Gastrocnemius medialis (tissue), 4 donors: ENCODE measurements at regions of chr10 and their contacts with region 1.

Region 1: DNA sequence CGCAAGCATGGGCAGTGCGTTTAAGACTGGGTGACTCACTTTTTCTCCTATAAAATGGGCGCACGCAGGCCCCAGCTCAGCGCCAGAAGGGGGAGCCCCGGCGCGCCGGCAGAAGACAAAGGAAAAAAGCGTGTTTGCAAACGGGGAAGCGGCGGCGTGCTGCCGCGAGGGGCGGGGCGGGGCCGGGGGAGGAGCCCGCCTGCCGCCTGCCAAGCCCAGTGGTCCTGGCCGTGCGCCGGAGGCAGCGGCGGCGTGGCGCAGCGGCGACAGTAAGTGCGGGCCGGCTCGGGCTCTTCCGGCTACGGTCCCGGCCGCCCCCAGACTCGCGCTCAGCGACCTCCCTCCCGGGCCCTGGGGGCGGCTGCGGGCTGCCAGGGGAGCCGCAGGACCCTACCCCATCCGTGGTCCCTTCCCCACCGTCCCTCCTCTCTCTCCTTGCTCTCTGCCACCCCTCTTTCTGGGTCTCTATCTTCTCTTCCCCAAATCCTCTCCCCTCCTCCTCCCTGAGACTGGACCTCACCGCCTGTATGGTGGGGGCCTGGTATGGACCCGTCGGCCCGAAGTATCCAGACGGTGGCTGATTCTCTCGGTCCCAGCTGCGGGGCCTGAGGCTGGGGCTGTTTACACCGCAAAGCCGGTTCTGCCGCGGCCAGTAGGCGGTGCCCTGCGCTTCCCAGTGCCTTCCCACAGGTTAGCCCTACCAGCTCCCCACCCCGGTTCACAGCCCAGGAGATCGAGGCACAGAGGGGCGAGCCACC is at the start of gene SLC29A3:
- DNase-seq: peak; percentile 57 to 65
- ATAC-seq: peak; percentile 88 to 89
- H3K4me3 ChIP-seq: peak within 1 kb of the TSS; percentile 64 to 83 (median 68)
- H3K27ac ChIP-seq: peak within 1 kb of the TSS; percentile 70 to 76 (median 73)
- H3K4me1 ChIP-seq: peaks cover 0 to 9% of the 10 kb centered on the region in 2 donors
- H3K27me3 ChIP-seq: no peaks in the 10 kb centered on the region
- CTCF ChIP-seq: peak; percentile 50 to 75 (median 55)
- POLR2A ChIP-seq: peak; percentile 62 to 77
- total RNA-seq, gene SLC29A3: 0.36 to 2.8 (median 2.0) TPM

Region 2: DNA sequence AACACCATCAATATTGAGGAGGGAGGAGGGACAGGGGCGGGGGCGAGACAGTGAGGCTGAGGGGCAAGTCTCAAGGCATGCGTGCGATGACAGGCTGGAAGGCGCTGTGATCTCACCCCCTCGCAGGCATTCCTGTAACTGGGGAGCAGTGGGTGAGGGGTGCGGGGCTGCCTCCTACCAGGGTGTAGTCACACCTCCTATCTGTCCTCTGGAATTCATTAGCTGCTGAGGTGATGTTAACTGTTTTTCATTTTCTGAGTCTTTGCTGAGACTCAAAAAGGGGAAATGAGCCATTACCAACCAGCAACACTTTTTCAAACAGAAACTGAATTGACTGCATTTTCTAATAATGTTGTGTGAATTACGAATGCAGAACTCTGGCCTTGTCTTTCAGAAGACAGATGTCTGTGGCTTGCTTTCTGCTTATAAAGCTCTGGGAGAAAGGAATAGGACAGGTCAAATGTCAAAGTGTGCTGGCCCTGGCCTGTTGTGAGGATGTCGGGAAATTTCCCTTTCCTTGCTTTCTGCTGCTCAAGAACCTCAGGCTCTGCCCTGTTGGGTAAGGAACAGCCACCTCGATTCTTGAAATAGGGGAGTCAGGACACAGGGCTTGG is 53.8 kb after region 1 on chr10:
- in situ Hi-C with region 1: no loop called
- intact Hi-C with region 1: loop called (anchors 1 kb)
- DNase-seq: no peak
- ATAC-seq: no peak
- H3K4me3 ChIP-seq: no peak overlapping the region
- H3K27ac ChIP-seq: no peak overlapping the region
- H3K4me1 ChIP-seq: peaks cover 7 to 9% of the 10 kb centered on the region in 2 donors
- H3K27me3 ChIP-seq: no peaks in the 10 kb centered on the region
- CTCF ChIP-seq: no peak
- POLR2A ChIP-seq: no peak

Region 3: GRCh38 chr10:71569775-71570588 is 250.8 kb after region 1 on chr10:
- in situ Hi-C with region 1: loop called (anchors 5 to 25 kb)
- intact Hi-C with region 1: loop called (anchors 1 kb)
- DNase-seq: peak; percentile 45 to 56
- ATAC-seq: peak; percentile 61 to 73
- H3K4me3 ChIP-seq: no peak overlapping the region
- H3K27ac ChIP-seq: no peak overlapping the region
- H3K4me1 ChIP-seq: peaks cover 0 to 1% of the 10 kb centered on the region in 2 donors
- H3K27me3 ChIP-seq: no peaks in the 10 kb centered on the region
- CTCF ChIP-seq: peak; percentile 75 to 89 (median 82)
- POLR2A ChIP-seq: no peak

Region 4: GRCh38 chr10:71771821-71772617 is 452.8 kb after region 1 on chr10:
- in situ Hi-C with region 1: no loop called
- intact Hi-C with region 1: loop called (anchors 5 kb)
- DNase-seq: peak in 1 of 2 donors; percentile 67
- ATAC-seq: peak; percentile 21 to 28
- H3K4me3 ChIP-seq: peak overlapping the region; percentile 61 to 81 (median 69)
- H3K27ac ChIP-seq: peak overlapping the region; percentile 77 to 91 (median 86)
- H3K4me1 ChIP-seq: peaks cover 64 to 83% of the 10 kb centered on the region in 2 donors
- H3K27me3 ChIP-seq: no peaks in the 10 kb centered on the region
- CTCF ChIP-seq: no peak
- POLR2A ChIP-seq: peak; percentile 24 to 44

Region 5: GRCh38 chr10:71899665-71900412 is 580.6 kb after region 1 on chr10:
- in situ Hi-C with region 1: no loop called
- intact Hi-C with region 1: loop called (anchors 5 kb)
- DNase-seq: no peak
- ATAC-seq: no peak
- H3K4me3 ChIP-seq: no peak overlapping the region
- H3K27ac ChIP-seq: no peak overlapping the region
- H3K4me1 ChIP-seq: no peaks in the 10 kb centered on the region
- H3K27me3 ChIP-seq: no peaks in the 10 kb centered on the region
- CTCF ChIP-seq: no peak
- POLR2A ChIP-seq: no peak